ENCODE measurements at regions of chr12 and their contacts with region 1.

Region 1: DNA sequence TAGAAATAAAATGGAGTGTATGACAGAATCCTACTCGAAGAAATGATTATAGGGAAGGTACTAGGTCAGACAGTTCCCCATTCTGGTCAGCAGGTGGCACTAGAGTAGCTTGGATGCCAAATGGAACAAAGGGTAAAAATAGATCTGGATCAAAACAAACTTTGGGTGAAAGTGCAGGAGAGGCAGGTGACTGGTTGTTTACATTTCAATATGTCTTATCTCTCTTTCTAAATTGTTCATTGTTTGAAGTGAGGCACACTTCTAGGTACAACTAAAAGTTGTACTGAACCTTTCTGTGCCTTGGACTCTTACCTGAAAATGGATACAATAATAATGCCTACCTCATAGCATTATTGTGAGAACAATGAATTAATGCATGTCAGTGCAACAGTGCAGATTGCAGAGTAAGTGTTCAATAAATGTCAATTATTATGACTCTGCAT is 62.0 kb upstream of the OSBPL8 start:
- DNase-seq: peak; percentile 64 to 78
- H3K4me3 ChIP-seq: no peak overlapping the region
- H3K27ac ChIP-seq: no peak overlapping the region
- H3K4me1 ChIP-seq: no peaks in the 10 kb centered on the region
- H3K27me3 ChIP-seq: no peaks in the 10 kb centered on the region
- CTCF ChIP-seq: peak; percentile 93 to 97 (median 95)
- POLR2A ChIP-seq: peak in 1 of 2 donors; percentile 14

Region 2: DNA sequence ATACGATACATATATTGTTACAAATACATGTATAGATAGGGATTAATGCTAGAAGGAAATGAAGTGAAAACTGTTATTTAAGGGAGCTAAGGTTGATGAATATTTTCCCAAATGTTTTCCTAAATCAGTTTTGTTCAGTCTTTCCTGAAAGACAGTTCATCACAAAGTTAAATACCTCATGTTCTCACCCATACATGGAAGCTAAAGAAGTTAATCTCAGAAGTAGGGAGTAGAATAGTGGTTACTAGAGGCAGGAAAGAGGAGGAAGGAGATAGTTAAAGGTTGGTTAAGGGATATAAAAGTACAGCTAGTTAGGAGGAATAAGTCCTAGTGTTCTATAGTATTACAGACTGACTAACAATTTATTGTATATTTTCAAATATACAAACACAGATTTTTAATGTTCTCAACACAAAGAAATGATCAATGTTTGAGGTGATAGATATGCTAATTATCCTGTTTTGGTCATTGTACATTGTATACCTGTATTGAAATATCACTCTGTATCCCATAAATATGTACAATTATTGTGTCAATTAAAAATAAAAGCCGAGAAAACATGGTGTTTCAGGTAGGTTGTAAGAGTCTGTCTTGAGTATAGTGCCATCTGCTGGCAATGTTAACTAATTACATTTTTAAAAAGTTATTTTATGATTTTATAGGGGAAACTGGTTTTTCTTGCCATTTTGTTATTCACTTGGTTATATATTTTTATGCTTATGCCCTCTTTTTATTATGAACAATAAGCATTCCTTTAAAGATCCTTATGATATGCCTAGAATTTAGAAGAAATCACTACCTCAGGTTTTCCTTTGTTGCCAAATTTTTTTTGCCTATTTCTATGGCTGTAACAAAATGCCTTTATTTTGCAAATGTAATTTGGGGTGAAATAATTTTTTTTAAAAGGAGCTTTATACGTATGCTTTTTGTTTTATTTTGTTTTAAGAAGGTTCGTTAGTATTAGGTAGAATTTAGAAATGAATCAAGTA is 169.3 kb after region 1 on chr12:
- intact Hi-C with region 1: loop called (anchors 5 kb)
- DNase-seq: no peak
- H3K4me3 ChIP-seq: no peak overlapping the region
- H3K27ac ChIP-seq: peak overlapping the region; percentile 19 to 54
- H3K4me1 ChIP-seq: no peaks in the 10 kb centered on the region
- H3K27me3 ChIP-seq: no peaks in the 10 kb centered on the region
- CTCF ChIP-seq: peak; percentile 62 to 75 (median 70)
- POLR2A ChIP-seq: no peak

Measured in uterus (tissue), 4 donors.